IMR-90 (cell line): ENCODE measurements at regions of chr10 and their contacts with region 1.

Region 1: DNA sequence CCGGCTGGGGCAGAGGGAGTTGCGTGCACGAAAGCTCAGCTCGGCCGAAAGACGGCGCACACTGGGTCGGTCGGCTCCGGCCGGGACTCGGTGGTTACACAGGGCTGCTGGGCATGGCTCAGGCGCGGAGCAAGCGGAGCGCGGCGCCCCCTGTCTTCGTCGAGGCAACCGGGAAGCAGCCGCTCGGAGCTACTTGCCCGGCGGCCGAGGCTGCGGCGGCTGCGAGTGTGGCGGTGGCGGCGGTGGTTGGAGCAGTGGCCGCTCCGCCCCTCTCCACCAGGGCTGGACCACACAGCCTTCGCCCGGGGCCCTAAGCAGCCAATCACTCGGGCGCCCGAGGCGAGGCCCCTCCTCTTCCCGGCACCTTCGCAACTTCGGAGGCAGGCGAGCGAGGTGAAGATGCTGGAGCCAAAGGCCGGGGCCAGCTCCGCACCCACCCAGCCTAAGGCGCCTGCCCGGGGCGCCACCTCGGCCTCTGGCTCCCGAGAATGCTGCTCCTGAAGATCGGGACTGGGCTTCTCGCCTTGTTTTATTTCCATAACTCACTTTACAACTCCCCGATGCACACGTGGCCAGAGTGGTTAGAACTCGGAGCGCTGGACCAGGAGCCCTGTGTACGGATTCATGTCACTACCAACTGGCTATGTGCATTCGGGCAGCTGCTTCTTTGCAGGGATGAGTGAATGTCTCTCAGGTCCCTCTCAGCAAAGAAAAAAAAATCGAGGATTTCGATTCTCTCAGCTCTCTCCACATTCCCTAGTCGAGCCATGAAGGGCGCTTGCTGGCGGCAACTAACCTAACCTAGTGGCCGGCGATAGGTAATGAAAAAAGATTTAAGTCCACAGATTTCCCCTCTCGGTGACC is at the start of gene TLL2:
- DNase-seq: peak; percentile 84
- ATAC-seq: peak; percentile 95
- H3K4me3 ChIP-seq: peak within 1 kb of the TSS; percentile 32
- H3K27ac ChIP-seq: no peak within 1 kb of the TSS
- H3K4me1 ChIP-seq: no peaks in the 10 kb centered on the region; the same call in 1 of the 2 replicates
- H3K27me3 ChIP-seq: peaks cover 21% of the 10 kb centered on the region
- CTCF ChIP-seq: peak; percentile 58
- POLR2A ChIP-seq: no peak
- RAD21 ChIP-seq: peak; percentile 34; the same call in 1 of the 2 replicates
- total RNA-seq, gene TLL2: under 0.01 TPM in 2 replicates

Region 2: GRCh38 chr10:96334616-96335526 is 179.1 kb before region 1 on chr10:
- CTCF ChIA-PET with region 1: no interaction called
- POLR2A ChIA-PET with region 1: no interaction called
- dilution Hi-C with region 1: no loop called
- in situ Hi-C with region 1: no loop called
- intact Hi-C with region 1: loop called (anchors 1 kb)
- DNase-seq: peak; percentile 41
- ATAC-seq: peak; percentile 87
- H3K4me3 ChIP-seq: no peak overlapping the region
- H3K27ac ChIP-seq: no peak overlapping the region
- H3K4me1 ChIP-seq: no peaks in the 10 kb centered on the region
- H3K27me3 ChIP-seq: no peaks in the 10 kb centered on the region; the same call in none of the 2 replicates
- CTCF ChIP-seq: peak; percentile 73
- POLR2A ChIP-seq: no peak
- RAD21 ChIP-seq: peak; percentile 50

Region 3: GRCh38 chr10:96374985-96375830 is 138.7 kb before region 1 on chr10:
- CTCF ChIA-PET with region 1: interaction called, 5 read pairs
- POLR2A ChIA-PET with region 1: no interaction called
- dilution Hi-C with region 1: no loop called
- in situ Hi-C with region 1: no loop called
- intact Hi-C with region 1: loop called (anchors 1 kb)
- DNase-seq: peak; percentile 77
- ATAC-seq: peak; percentile 99
- H3K4me3 ChIP-seq: peak overlapping the region; percentile 36
- H3K27ac ChIP-seq: no peak overlapping the region
- H3K4me1 ChIP-seq: no peaks in the 10 kb centered on the region
- H3K27me3 ChIP-seq: peaks cover 14% of the 10 kb centered on the region
- CTCF ChIP-seq: peak; percentile 99
- POLR2A ChIP-seq: no peak
- RAD21 ChIP-seq: peak; percentile 88

Region 4: GRCh38 chr10:96421995-96422924 is 91.7 kb before region 1 on chr10:
- CTCF ChIA-PET with region 1: no interaction called
- POLR2A ChIA-PET with region 1: no interaction called
- dilution Hi-C with region 1: no loop called
- in situ Hi-C with region 1: no loop called
- intact Hi-C with region 1: no loop called
- DNase-seq: no peak
- ATAC-seq: no peak
- H3K4me3 ChIP-seq: no peak overlapping the region
- H3K27ac ChIP-seq: no peak overlapping the region
- H3K4me1 ChIP-seq: no peaks in the 10 kb centered on the region
- H3K27me3 ChIP-seq: no peaks in the 10 kb centered on the region; the same call in 1 of the 2 replicates
- CTCF ChIP-seq: no peak
- POLR2A ChIP-seq: no peak
- RAD21 ChIP-seq: no peak

Region 5: GRCh38 chr10:96463562-96463961 is 50.4 kb before region 1 on chr10:
- CTCF ChIA-PET with region 1: no interaction called
- POLR2A ChIA-PET with region 1: no interaction called
- dilution Hi-C with region 1: no loop called
- in situ Hi-C with region 1: no loop called
- intact Hi-C with region 1: no loop called
- DNase-seq: no peak
- ATAC-seq: no peak
- H3K4me3 ChIP-seq: no peak overlapping the region
- H3K27ac ChIP-seq: no peak overlapping the region
- H3K4me1 ChIP-seq: no peaks in the 10 kb centered on the region
- H3K27me3 ChIP-seq: peaks cover 2% of the 10 kb centered on the region; the same call in 1 of the 2 replicates
- CTCF ChIP-seq: no peak
- POLR2A ChIP-seq: no peak
- RAD21 ChIP-seq: no peak

Region 6: GRCh38 chr10:96541921-96542320 is 28.0 kb after region 1 on chr10:
- CTCF ChIA-PET with region 1: no interaction called
- POLR2A ChIA-PET with region 1: no interaction called
- dilution Hi-C with region 1: no loop called
- in situ Hi-C with region 1: no loop called
- intact Hi-C with region 1: no loop called
- DNase-seq: peak; percentile 29
- ATAC-seq: peak; percentile 44; the same call in 1 of the 2 replicates
- H3K4me3 ChIP-seq: no peak overlapping the region
- H3K27ac ChIP-seq: no peak overlapping the region
- H3K4me1 ChIP-seq: no peaks in the 10 kb centered on the region
- H3K27me3 ChIP-seq: no peaks in the 10 kb centered on the region
- CTCF ChIP-seq: no peak
- POLR2A ChIP-seq: no peak
- RAD21 ChIP-seq: no peak

Region 7: DNA sequence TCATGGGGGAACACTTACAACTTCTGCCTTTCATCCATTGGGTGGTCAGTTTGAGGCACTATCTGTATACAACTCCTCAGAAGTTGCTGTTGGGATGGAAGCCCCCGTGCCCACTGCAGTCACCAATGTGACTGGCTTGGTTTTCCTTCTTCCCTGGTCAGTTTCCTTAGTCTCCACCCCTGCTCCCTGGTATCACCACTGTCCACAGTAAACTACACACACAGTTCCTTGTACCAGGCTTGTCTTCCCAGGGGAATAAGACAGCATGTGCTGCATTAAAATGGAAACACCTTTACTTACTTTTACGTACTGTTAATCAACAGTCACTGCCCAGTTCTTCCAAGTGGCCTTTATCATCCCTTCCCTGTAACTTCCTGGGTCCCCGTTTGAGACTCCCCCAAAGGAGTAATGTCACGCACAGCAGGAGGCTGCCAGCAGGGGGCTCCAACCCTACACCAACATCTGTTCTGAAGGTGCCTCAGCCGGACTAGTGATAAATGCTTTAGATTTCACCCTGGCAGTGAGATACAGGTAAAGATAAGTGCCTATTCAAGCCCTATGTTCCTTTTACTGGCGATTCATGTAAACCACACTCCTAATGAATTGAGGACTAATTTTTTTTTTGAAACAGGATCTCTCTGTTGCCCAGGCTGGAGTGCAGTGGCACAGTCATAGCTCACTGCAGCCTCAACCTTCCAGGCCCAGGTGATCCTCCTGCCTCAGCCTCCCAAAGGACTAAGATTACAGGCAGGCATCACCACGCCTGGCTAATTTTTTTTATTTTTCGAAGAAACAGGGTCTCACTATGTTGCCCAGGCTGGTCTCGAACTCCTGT is 251.7 kb after region 1 on chr10:
- CTCF ChIA-PET with region 1: no interaction called
- POLR2A ChIA-PET with region 1: no interaction called
- dilution Hi-C with region 1: no loop called
- in situ Hi-C with region 1: no loop called
- intact Hi-C with region 1: loop called (anchors 1 kb)
- DNase-seq: peak; percentile 44
- ATAC-seq: peak; percentile 93
- H3K4me3 ChIP-seq: no peak overlapping the region
- H3K27ac ChIP-seq: no peak overlapping the region
- H3K4me1 ChIP-seq: no peaks in the 10 kb centered on the region
- H3K27me3 ChIP-seq: peaks cover 7% of the 10 kb centered on the region
- CTCF ChIP-seq: peak; percentile 81
- POLR2A ChIP-seq: no peak
- RAD21 ChIP-seq: peak; percentile 83